Dorsolateral prefrontal cortex (tissue), 120 donors: ENCODE measurements at regions of chr11 and their contacts with region 1.

Region 1: GRCh38 chr11:105856954-105857353 is 165.1 kb downstream of the MSANTD4 start:
- DNase-seq: no peak
- H3K4me3 ChIP-seq: no peak overlapping the region
- H3K27ac ChIP-seq: no peak overlapping the region
- H3K27me3 ChIP-seq: no peaks in the 10 kb centered on the region
- CTCF ChIP-seq: no peak

Region 2: DNA sequence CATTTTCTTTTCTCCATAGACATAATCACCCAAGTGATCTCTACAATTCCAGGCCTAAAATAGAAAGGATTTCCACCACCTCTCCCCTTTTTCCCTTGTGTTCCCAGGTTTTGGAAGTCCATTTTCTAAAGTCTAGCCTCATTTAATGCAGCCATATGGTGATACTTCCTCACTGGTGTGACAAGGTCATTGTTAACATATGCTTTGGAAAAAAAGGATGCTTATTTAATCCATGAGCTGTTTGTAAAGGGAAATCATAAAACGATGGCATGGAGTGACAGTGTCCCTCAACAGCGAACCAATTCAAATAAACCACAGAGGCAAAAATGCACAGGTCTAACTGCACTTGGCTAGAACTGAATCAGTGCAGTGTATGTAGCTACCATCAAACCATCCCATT is 220.5 kb before region 1 on chr11:
- intact Hi-C with region 1: loop called in 1 of 2 experiments (anchors 10 kb)
- DNase-seq: no peak
- H3K4me3 ChIP-seq: no peak overlapping the region
- H3K27ac ChIP-seq: no peak overlapping the region
- H3K27me3 ChIP-seq: no peaks in the 10 kb centered on the region
- CTCF ChIP-seq: no peak

Region 3: DNA sequence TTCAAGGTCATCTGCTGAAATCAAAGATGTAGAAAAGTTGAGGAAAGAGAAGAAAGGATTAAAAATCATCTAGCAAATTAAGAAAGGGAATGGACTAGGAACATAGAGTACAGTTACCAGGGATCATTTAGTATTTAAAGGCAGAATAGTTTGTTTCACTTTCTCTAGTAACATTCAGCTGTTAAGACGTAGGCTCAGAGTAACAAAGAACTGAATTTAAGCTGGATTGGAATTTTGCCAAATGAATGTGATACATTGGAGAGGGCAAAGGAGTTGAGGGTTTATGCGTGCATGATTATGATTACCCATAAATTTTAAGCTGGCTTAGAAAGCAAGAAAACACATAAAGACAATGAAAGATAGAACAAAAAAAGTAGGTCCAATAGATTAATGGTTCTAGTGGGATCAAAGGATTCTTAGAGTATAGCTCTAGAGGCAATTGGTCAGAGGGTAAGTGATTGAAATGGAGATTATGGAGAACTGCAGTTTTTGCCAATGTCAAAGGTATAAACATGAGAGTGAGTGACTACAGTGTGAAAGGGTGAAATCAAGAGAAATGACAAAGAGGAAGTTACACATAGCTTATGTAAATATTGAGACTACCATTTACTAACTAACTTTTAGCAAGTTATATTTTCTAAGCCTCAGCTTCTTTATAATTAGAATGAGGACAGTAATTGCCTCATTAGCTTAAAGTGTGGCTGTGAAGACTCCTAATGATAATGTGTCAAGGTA is 57.1 kb before region 1 on chr11:
- intact Hi-C with region 1: no loop called
- DNase-seq: no peak
- H3K4me3 ChIP-seq: peak overlapping the region in 5 of 59 donors; percentile 11 to 20 (median 13)
- H3K27ac ChIP-seq: no peak overlapping the region
- H3K27me3 ChIP-seq: no peaks in the 10 kb centered on the region
- CTCF ChIP-seq: no peak

Region 4: DNA sequence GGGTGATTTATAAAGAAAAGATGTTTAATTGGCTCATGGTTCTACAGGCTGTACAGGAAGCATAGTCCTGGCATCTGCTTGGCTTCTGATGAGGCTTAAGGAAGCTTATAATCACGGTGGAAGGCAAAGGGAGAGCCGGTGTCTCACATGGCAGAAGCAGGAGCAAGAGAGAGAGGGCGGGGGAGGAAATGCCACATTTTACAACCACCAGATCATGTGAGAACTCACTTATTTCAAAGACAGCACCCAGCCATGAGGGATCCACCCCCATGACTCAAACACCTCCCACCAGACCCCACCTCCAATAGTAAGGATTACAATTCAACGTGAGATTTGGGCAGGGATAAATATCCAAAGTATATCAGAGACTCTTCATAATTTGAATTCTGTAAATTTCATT is 35.6 kb before region 1 on chr11:
- intact Hi-C with region 1: no loop called
- DNase-seq: peak in 5 of 10 donors; percentile 8 to 59 (median 37)
- H3K4me3 ChIP-seq: peak overlapping the region in 1 of 59 donors; percentile 11
- H3K27ac ChIP-seq: peak overlapping the region in 10 of 59 donors; percentile 2 to 39 (median 26)
- H3K27me3 ChIP-seq: no peaks in the 10 kb centered on the region
- CTCF ChIP-seq: no peak